Calu3 (cell line): ENCODE measurements at regions of chr14 and their contacts with region 1.

Region 1: DNA sequence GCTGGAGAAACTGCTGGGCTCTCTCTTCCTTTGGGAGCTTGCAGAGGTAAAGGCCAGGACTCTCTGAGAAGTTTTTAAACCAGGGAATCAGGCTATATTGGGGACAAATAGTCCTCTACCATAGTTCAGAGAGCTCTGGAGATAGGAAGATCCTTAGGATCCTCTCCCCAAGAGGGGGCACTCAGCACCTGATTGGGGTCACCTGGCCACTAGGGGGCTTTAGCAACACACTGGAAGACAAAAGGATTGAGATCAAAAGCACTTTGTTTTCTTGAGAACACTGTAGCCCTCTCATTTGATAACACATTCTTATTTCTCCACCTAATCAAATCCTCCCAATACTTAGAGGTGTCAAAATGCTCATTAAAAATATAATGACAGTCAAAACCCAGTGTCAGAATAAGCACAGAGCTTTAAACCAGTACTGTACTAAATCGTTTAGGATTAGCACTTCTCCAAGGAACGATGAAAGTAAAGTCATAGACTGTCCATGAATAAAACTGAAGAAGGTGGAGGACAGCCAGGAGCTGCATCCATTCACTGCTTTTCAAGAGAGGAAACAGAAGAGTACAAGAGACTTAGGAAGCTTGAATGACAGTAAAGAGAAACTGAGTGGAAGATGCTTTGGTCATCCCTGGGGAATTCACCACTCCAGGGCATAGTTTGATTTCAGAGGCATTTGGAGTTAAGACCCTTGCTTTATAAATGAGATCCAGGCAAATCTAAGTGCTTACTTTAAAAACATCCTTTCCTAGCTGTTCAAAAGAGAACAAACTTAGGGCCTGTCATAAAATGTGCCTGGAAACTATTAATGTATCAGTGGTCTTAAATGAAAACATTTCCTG is 26.5 kb downstream of the BMP4 start:
- DNase-seq: peak; percentile 76
- H3K4me3 Mint-ChIP-seq: no peak overlapping the region
- H3K27ac Mint-ChIP-seq: no peak overlapping the region
- H3K4me1 Mint-ChIP-seq: peaks cover 28% of the 10 kb centered on the region
- H3K27me3 Mint-ChIP-seq: no peaks in the 10 kb centered on the region
- CTCF ChIP-seq: peak; percentile 43

Region 2: DNA sequence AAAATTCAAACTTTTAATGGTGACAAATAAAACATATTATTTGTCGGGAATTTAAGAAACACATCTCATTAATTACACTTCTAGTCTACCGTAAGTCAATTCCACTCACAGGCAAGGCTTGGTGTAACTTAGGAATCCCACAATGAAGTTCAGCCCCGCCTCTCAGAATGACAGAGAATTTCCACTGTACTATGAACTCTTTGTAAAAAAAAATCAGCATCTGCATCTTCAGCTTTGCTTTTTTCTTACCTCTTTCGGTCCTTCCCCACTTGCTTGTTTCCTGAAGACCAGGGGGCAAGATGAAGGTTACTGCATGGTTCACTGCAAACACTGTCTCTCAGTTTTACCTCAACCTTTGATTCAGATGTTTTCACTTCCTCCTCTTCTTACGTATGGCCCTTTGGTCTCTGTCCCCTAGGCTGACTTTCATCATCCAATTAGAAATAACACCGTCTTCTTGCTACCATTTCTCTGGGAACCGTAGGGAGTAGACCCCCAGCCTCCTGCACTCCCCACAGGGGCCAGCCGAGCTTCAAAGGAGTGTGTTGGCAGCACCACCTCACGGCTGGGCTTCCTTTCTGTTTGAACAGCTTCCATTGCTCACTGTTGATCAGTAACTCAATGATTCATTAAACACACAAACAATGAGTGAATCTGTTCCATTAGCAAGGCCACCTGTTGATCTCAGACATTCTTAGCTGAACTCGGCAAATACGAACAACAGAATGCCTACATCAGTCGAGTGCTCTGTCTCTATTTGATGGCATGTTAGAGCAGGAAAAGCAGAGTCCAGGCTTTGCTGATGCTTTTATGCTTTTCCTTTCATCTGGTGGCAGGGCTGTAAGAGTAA is 316.5 kb before region 1 on chr14:
- CTCF ChIA-PET with region 1: no interaction called
- intact Hi-C with region 1: loop called (anchors 10 kb)
- DNase-seq: peak; percentile 64
- H3K4me3 Mint-ChIP-seq: peak overlapping the region; percentile 72
- H3K27ac Mint-ChIP-seq: peak overlapping the region; percentile 94
- H3K4me1 Mint-ChIP-seq: peaks cover 30% of the 10 kb centered on the region
- H3K27me3 Mint-ChIP-seq: no peaks in the 10 kb centered on the region
- CTCF ChIP-seq: no peak

Region 3: DNA sequence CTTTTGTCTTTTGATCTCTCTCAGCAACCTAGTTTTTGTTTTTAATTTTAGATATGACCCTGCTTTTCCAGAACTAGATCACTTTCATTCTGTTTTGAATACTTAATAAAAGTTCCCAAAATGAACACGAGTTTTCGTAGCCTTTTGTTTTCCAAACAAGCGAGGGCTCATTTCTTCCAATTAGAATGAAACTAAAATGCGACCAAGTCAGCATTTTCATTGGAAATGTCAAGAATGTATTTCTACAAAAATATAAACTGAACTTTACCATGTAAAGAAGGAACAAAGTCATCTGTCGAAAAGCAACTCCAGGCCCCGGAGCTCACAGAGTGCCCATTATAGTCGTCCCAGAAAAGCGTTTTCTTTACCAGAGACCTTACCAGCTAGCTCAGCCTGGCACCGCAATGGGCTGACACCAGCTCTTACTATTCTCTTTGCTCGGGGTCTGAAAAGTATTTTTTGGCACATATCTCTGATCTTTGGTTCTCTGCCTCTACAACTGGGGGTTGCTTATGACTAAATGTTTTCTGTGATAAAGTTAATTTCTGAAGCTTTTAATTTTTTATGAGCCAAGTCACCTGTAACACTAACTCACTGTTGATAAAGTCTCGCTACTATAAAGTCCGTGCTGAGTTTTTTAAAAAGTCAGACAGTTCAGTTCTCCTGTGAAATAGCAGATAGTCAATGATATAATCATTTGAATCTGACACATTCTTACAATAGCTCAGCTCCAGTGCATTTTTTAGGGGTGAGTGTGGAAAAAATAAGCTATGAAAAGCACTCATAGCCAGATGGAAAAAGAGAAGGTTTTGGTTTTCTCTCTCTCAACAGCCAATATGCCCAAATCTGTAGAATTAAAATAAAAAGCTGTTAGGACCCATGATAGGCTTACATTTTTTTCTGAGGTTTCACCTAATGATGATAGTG is 680.2 kb after region 1 on chr14:
- CTCF ChIA-PET with region 1: no interaction called
- intact Hi-C with region 1: no loop called
- DNase-seq: no peak
- H3K4me3 Mint-ChIP-seq: no peak overlapping the region
- H3K27ac Mint-ChIP-seq: no peak overlapping the region
- H3K4me1 Mint-ChIP-seq: no peaks in the 10 kb centered on the region
- H3K27me3 Mint-ChIP-seq: no peaks in the 10 kb centered on the region
- CTCF ChIP-seq: no peak